SK-N-SH (cell line): ENCODE measurements at regions of chr20 and their contacts with region 1.

Region 1: DNA sequence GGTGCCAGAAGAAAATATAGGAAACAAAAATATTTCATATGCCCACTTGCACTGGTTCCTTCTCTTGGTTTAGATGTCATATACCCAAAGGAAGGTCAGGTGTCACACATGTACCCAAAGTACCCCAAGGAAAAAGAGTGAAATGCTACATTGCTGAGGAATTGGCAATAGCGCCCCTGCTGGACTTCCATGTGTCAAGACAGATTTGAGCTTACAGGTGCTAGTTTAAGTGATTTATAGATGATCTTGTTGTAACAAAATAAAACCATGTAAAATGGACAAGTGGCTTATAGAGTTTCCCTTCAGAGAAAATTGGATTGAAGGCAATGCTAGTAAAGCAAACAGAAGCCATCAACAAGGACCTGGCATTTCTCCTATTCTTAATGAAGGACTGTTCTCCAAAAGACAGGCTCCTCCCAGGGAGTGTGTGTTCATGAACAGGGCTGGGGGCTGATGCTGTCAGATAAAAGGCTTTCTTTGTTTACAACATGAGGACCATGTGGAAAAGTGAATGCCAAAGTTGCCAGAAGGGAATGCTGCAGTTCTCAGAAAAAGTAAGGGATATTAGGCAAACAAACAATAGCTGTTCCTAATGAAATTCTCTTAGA is 64.3 kb upstream of the PAK5 start:
- DNase-seq: no peak
- H3K4me3 ChIP-seq: no peak overlapping the region
- H3K27ac ChIP-seq: no peak overlapping the region
- H3K4me1 ChIP-seq: no peaks in the 10 kb centered on the region
- H3K27me3 ChIP-seq: peaks cover 6% of the 10 kb centered on the region; the same call in 1 of the 2 replicates
- CTCF ChIP-seq: peak; percentile 53
- EP300 ChIP-seq: no peak
- RAD21 ChIP-seq: no peak

Region 2: DNA sequence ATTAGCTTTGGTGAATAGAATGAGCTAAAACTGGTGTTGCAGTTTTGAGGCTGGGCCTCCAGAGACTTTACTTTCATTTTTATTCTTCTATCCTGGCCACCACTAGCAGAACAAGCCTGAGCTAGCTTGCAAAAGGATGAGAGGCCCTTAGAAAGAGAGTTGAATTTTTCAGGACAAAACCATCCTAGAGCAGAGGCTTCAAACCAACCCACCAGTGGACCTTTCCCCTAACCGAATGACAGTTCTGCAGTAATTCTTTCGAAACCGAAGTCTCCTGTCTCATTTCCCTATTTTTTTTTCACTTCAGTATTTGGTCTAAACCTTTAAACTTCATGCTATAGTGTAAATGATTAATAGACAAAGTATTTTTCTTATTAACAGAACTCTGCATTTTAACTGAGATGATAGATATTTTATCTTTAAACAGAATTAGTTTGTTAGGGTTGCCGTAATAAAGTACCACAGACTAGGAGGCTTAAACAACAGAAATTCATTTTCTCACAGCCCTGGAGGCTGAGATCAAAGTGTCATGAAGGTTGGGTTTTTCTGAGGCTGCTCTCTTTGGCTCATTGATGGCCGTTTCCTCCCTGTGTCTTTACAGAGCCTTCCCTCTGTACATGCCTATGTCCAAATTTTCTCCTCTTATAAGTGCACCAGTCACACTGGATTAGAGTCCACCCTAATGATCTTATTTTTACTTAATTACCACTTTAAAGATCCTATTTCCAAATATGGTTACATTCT is 16.3 kb after region 1 on chr20:
- CTCF ChIA-PET with region 1: interaction called, 49 read pairs
- POLR2A ChIA-PET with region 1: no interaction called
- DNase-seq: no peak
- H3K4me3 ChIP-seq: no peak overlapping the region
- H3K27ac ChIP-seq: no peak overlapping the region
- H3K4me1 ChIP-seq: no peaks in the 10 kb centered on the region
- H3K27me3 ChIP-seq: no peaks in the 10 kb centered on the region; the same call in 1 of the 2 replicates
- CTCF ChIP-seq: no peak
- EP300 ChIP-seq: no peak
- RAD21 ChIP-seq: no peak

Region 3: DNA sequence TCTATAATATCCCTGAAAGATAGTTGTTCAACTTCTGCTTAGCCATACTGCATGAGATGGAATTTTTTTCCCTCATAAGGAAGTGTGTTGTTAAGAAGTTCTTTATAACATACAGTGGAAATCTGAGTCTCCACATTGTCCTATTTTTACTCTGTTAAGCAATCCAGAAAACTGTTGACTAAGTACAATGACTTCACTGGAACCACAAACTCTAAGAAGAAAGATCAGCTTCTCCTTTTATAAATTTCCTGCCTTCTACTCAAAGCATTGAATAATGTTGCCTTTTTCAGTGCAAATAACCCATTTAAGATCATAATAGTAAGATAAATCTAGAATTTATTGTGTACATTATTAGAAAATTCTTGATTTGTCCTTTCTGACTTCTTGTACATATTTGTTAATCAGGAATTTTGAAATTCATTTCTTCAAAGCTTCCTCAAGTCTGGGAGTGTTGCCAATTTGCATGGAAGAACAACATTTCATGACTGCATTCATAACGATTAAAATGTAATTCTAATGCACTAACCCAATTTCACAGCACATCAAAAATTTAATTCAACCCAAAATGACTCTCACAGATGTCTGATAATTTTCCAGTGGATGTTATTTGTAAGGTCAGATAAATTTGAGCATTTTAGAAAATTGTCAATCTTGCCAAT is 86.0 kb after region 1 on chr20:
- CTCF ChIA-PET with region 1: no interaction called
- POLR2A ChIA-PET with region 1: no interaction called
- DNase-seq: no peak
- H3K4me3 ChIP-seq: no peak overlapping the region
- H3K27ac ChIP-seq: peak overlapping the region; percentile 16 to 31; a peak in 2 of 4 replicates
- H3K4me1 ChIP-seq: no peaks in the 10 kb centered on the region; a peak in 1 of 4 replicates
- H3K27me3 ChIP-seq: no peaks in the 10 kb centered on the region
- CTCF ChIP-seq: no peak
- EP300 ChIP-seq: no peak
- RAD21 ChIP-seq: no peak